HCT116 (cell line): ENCODE measurements at regions of chr5 and their contacts with region 1.

Region 1: GRCh38 chr5:151523335-151523734 is 67.8 kb downstream of the FAT2 start:
- DNase-seq: peak; percentile 39
- ATAC-seq: peak; percentile 98
- H3K4me3 ChIP-seq: no peak overlapping the region
- H3K27ac ChIP-seq: no peak overlapping the region
- H3K4me1 ChIP-seq: no peaks in the 10 kb centered on the region
- H3K27me3 ChIP-seq: no peaks in the 10 kb centered on the region
- CTCF ChIP-seq: peak; percentile 78 to 81 (median 81)
- POLR2A ChIP-seq: no peak
- RAD21 ChIP-seq: peak; percentile 89

Region 2: DNA sequence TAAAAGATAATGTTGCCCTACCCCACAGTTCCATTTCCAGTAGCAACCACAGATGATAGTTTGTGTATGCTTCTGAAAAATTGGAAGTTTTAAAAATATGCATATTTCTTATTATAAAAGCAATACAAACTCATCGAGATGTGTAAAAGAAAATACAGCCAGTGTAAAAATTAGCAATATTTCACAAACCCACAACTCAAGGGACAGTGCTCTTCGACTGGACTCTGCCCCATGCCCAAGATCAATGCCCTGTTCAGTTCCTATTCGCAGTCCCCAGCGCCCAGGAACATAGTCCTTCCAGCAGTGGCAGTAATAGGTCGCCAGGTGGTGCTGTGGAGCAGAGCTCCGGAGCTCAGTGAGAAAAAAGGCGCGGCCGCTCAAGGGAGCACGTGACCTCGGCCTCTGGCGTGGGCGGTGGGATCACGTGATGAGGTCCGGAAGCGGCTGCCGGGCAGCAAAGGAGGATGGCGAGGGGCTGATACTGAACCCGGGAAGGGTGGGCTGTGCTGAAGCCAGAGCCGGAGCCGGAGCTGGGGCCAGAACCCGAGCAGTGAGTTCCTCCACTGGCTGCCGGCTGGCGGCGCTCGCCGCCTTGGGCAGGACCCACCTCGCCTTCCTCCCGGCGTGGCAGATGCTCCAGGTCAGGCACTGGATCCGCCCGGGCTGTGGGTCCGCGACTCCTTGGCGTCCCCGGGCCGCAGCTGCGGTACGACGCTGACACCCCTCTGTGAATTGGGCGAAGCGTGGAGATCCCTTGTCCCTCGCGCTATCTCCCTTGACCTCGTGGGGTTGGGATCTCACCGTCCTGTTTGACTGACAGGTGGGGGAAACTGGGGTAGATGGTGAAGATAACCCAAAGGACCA is 75.9 kb before region 1 on chr5 and contains the start of gene SLC36A1:
- CTCF ChIA-PET with region 1: interaction called, 12 read pairs
- POLR2A ChIA-PET with region 1: no interaction called
- RAD21 ChIA-PET with region 1: interaction called in 1 of 2 experiments, 4 read pairs
- intact Hi-C with region 1: loop called (anchors 1 kb)
- DNase-seq: peak; percentile 80
- ATAC-seq: peak; percentile 92
- H3K4me3 ChIP-seq: peak within 1 kb of the TSS; percentile 73 to 77
- H3K27ac ChIP-seq: peak within 1 kb of the TSS; percentile 40
- H3K4me1 ChIP-seq: peaks cover 5 to 24% of the 10 kb centered on the region in 2 experiments; a peak in 3 of 4 replicates
- H3K27me3 ChIP-seq: no peaks in the 10 kb centered on the region
- CTCF ChIP-seq: peak; percentile 92 to 96 (median 94)
- POLR2A ChIP-seq: peak; percentile 59
- RAD21 ChIP-seq: peak; percentile 90
- total RNA-seq, gene SLC36A1: 7.4 TPM